Activated naive CD4-positive, alpha-beta T cell treated with anti-CD3 and anti-CD28 coated beads for 36 hours (primary cell): ENCODE measurements at regions of chr4 and their contacts with region 1.

Region 1: DNA sequence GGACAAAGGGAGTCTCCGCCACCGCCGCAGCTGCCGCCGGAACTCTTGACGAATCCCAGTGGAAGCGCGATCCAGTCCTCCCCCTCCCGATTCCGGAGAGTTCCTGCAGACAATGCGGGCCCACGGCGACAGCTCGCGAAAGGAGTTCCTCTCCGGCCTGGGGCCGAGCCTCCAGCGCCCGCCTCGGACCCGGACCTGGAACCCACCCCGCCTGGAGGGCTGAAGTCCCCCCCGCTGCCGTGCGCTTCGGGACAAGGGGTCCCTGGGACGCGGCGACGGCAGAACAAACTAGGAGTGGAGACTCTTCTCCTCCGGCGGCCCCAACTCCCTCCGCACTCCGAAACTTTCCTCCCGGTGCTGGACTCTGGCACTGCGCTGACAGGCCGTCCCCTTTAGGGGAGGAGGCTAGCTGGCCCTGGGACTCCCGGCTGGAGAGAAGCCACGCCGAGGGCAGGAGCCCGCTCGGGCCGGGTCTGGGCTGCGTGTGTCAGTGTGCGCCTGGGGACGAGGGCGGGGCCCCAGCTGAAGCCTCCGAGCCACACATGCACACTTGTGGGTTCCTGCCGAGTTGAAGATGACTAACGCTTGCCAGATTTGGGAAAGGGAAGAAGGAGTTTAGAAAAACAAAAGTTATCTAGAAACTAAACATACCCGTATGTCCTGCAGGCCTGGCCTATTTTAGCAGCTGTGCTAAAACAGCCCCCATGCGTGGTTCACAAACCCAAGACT is at the start of gene ANTXR2:
- DNase-seq: peak; percentile 64
- H3K4me3 Mint-ChIP-seq: peak within 1 kb of the TSS; percentile 84
- H3K27ac Mint-ChIP-seq: peak within 1 kb of the TSS; percentile 82
- H3K4me1 Mint-ChIP-seq: peaks cover 76% of the 10 kb centered on the region
- H3K27me3 Mint-ChIP-seq: peaks cover 2% of the 10 kb centered on the region
- total RNA-seq, gene ANTXR2: 0.50 to 0.79 TPM

Region 2: DNA sequence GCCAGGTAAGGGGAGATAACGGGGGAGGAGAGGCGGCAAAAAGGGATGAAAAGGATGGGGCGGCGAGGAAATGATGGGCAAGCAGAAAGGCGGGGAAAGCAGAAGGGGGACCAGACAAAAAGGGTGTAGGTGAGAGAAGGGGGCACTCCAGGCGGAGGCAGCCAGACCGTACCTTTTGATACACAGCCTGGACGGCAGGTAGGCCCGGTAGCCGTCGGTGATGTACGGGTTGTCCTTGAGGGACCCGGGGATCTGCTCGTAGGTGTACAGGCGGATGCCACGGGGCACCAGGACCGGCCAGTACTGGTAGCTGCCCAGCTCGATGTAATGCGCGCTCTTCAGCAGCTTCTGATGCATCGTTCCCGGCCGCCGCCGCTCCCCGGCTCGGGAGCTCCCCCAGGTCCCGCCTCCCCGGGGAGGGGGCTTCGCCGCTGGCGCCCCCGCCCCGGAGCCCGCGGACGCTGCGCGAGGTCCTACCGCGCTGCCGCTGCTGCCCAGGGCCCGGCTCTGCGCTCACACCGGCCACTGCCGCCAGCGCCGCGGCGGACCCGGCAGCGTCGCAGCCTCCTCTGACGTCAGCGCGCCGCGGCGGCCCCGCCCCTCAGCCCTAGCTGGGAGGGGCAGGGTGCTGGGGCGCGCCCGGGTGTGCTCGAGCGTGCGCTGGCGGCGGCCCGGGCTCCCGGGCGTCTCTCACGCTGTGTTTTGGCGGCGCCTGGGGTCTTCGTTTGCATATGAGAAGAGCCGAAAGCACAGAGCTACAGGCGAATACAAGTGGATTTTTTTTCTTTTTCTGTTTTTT is 1133.8 kb before region 1 on chr4 and contains the start of gene PAQR3:
- CTCF ChIA-PET with region 1: no interaction called
- intact Hi-C with region 1: loop called (anchors 2 kb)
- DNase-seq: peak; percentile 82
- H3K4me3 Mint-ChIP-seq: peak within 1 kb of the TSS; percentile 92
- H3K27ac Mint-ChIP-seq: peak within 1 kb of the TSS; percentile 50
- H3K4me1 Mint-ChIP-seq: peaks cover 28% of the 10 kb centered on the region
- H3K27me3 Mint-ChIP-seq: peaks cover 2% of the 10 kb centered on the region
- total RNA-seq, gene PAQR3: 12.4 to 13.9 TPM

Region 3: GRCh38 chr4:79917246-79917645 is 155.7 kb before region 1 on chr4:
- CTCF ChIA-PET with region 1: interaction called, 5 read pairs
- intact Hi-C with region 1: loop called (anchors 1 kb)
- DNase-seq: peak; percentile 67
- H3K4me3 Mint-ChIP-seq: no peak overlapping the region
- H3K27ac Mint-ChIP-seq: no peak overlapping the region
- H3K4me1 Mint-ChIP-seq: peaks cover 2% of the 10 kb centered on the region
- H3K27me3 Mint-ChIP-seq: no peaks in the 10 kb centered on the region

Region 4: GRCh38 chr4:80036949-80037685 is 35.8 kb before region 1 on chr4:
- CTCF ChIA-PET with region 1: interaction called, 3 read pairs
- intact Hi-C with region 1: loop called (anchors 2 kb)
- DNase-seq: no peak
- H3K4me3 Mint-ChIP-seq: peak overlapping the region; percentile 70
- H3K27ac Mint-ChIP-seq: peak overlapping the region; percentile 86
- H3K4me1 Mint-ChIP-seq: peaks cover 32% of the 10 kb centered on the region
- H3K27me3 Mint-ChIP-seq: no peaks in the 10 kb centered on the region

Region 5: DNA sequence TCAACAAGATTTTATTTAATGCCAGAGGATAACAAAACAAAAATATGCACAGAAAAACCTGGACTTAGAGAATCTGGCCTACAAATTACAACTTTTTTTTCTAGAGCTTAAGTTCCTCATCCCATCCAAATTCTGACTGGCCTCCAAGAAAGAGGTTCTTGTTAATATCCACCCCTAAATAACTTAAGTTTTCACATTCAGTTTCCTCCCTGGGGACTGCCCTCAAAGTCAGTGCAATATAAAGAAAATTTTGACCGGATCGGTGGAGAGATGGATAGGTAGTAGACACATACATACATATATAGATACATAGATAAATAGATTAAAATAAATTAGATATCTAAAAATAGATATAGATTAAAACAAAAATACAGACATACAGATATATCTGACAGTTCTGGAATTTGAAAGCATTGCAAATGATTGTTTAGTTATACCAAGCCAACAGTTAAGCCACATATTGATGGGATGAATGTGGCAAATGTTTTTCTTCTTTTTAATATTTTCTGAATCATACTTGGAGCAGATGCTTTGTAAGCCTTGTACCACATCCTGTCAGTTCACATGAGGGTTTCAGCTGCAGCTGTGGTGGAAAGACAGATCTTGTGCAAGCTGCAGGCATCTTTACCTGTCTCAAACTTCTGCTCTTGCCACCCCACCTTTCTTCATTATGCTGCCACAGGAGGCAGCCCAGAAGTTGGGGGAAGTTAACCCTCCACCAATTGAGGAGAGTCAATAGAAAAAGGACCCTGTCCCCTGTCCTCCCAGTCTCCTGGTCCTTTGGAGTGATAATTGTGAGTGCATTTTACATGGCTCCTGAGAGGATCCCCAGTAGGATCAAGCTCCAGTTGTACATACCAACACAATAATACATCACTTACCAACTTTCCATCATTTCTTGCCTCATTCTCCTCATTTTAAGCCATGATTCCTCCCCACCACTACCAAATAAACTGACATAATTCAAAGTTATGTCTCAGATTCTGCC is 65.9 kb after region 1 on chr4:
- CTCF ChIA-PET with region 1: no interaction called
- intact Hi-C with region 1: loop called (anchors 1 kb)
- DNase-seq: peak; percentile 82
- H3K4me3 Mint-ChIP-seq: no peak overlapping the region
- H3K27ac Mint-ChIP-seq: no peak overlapping the region
- H3K4me1 Mint-ChIP-seq: peaks cover 57% of the 10 kb centered on the region
- H3K27me3 Mint-ChIP-seq: no peaks in the 10 kb centered on the region

Region 6: DNA sequence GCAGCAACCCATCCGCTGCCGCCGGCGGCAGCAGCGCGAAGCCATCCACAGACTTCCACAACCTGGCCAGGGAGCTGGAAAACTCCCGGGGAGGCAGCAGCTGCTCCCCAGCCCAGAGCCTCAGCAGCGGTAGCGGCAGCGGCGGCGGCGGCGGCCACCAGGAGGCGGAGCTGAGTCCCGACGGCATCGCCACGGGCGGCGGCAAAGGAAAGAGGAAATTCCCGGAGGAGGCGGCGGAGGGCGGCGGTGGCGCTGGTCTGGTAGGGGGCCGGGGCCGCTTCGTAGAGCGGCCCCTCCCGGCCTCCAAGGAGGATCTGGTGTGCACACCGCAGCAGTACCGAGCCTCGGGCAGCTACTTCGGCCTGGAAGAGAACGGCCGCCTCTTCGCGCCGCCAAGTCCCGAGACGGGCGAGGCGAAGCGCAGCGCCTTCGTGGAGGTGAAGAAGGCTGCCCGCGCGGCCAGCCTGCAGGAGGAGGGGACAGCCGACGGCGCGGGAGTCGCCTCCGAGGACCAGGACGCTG is 129.3 kb after region 1 on chr4:
- CTCF ChIA-PET with region 1: interaction called, 3 read pairs
- intact Hi-C with region 1: loop called (anchors 1 kb)
- DNase-seq: peak; percentile 79
- H3K4me3 Mint-ChIP-seq: peak overlapping the region; percentile 70
- H3K27ac Mint-ChIP-seq: no peak overlapping the region
- H3K4me1 Mint-ChIP-seq: peaks cover 20% of the 10 kb centered on the region
- H3K27me3 Mint-ChIP-seq: peaks cover 20% of the 10 kb centered on the region